ENCODE measurements at regions of chr13 and their contacts with region 1.

Region 1: GRCh38 chr13:40517486-40518480 is 148.7 kb downstream of the FOXO1 start:
- DNase-seq: peak; percentile 48
- H3K4me3 Mint-ChIP-seq: peak overlapping the region; percentile 61
- H3K27ac Mint-ChIP-seq: peak overlapping the region; percentile 86
- H3K4me1 Mint-ChIP-seq: peaks cover 71% of the 10 kb centered on the region
- H3K27me3 Mint-ChIP-seq: no peaks in the 10 kb centered on the region

Region 2: GRCh38 chr13:40149611-40150274 is 368.0 kb before region 1 on chr13:
- CTCF ChIA-PET with region 1: no interaction called
- POLR2A ChIA-PET with region 1: no interaction called
- intact Hi-C with region 1: loop called (anchors 5 kb)
- DNase-seq: no peak
- H3K4me3 Mint-ChIP-seq: no peak overlapping the region
- H3K27ac Mint-ChIP-seq: peak overlapping the region; percentile 18
- H3K4me1 Mint-ChIP-seq: peaks cover 62% of the 10 kb centered on the region
- H3K27me3 Mint-ChIP-seq: no peaks in the 10 kb centered on the region

Region 3: GRCh38 chr13:40251343-40252032 is 266.3 kb before region 1 on chr13:
- CTCF ChIA-PET with region 1: no interaction called
- POLR2A ChIA-PET with region 1: no interaction called
- intact Hi-C with region 1: loop called (anchors 5 kb)
- DNase-seq: peak; percentile 13
- H3K4me3 Mint-ChIP-seq: no peak overlapping the region
- H3K27ac Mint-ChIP-seq: peak overlapping the region; percentile 70
- H3K4me1 Mint-ChIP-seq: peaks cover 42% of the 10 kb centered on the region
- H3K27me3 Mint-ChIP-seq: no peaks in the 10 kb centered on the region

Region 4: DNA sequence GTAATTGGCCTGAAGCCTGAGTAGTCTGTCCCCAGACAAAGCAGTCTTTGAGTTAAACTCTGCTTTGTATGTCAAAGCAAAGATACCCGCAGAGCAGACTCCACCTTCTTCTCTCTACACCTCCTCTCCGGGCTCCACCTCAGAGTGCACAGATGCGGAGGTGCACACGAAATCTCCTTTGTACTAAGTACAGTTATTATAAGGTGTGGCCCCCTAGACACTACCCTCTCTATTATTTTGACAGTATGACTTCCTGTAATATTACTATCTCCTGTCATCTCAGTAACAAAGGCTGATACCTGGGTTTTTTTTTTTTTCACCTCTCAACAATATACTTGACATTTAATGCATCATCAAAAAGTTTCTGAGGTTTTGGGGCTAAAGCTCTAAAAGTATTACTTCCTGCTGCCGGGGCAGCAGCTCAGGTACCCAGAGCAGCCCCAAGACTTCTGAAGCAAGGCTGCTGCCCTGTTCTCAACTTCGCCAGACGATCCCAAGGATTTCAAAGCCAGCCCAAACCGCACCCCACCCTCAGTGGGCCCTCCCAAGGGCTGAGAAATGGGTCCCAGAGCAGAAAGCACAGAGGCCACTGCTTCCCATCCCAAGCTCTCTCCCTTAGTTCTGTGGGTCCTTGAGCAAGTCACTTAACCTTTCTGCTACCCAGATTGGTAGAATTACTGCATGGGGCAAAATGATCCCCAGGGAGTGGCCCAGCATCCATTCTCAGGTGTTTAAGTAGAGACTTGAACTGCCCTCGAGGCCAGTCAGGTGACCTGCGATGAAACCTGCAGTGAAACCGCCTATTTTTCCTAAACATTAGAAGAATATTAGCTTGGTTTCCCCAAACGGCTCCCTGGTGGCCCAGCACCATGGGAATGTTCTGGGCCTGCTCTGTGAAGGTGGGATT is 31.9 kb before region 1 on chr13:
- CTCF ChIA-PET with region 1: no interaction called
- POLR2A ChIA-PET with region 1: interaction called, 7 read pairs
- intact Hi-C with region 1: loop called (anchors 1 kb)
- DNase-seq: peak; percentile 81
- H3K4me3 Mint-ChIP-seq: peak overlapping the region; percentile 24
- H3K27ac Mint-ChIP-seq: peak overlapping the region; percentile 75
- H3K4me1 Mint-ChIP-seq: peaks cover 78% of the 10 kb centered on the region
- H3K27me3 Mint-ChIP-seq: no peaks in the 10 kb centered on the region

Region 5: GRCh38 chr13:40764587-40765403 is 247.0 kb after region 1 on chr13:
- CTCF ChIA-PET with region 1: no interaction called
- POLR2A ChIA-PET with region 1: no interaction called
- intact Hi-C with region 1: loop called (anchors 10 kb)
- DNase-seq: peak; percentile 75
- H3K4me3 Mint-ChIP-seq: peak overlapping the region; percentile 23
- H3K27ac Mint-ChIP-seq: peak overlapping the region; percentile 85
- H3K4me1 Mint-ChIP-seq: peaks cover 47% of the 10 kb centered on the region
- H3K27me3 Mint-ChIP-seq: no peaks in the 10 kb centered on the region